ENCODE measurements at regions of chr4 and their contacts with region 1.

Region 1: GRCh38 chr4:6855692-6856297 is 53.8 kb upstream of the TBC1D14 start:
- DNase-seq: peak; percentile 38 to 84 (median 52)
- H3K4me3 ChIP-seq: no peak overlapping the region
- H3K4me3 Mint-ChIP-seq: peak overlapping the region in 5 of 8 donors; percentile 1 to 30 (median 9)
- H3K27ac ChIP-seq: no peak overlapping the region
- H3K27ac Mint-ChIP-seq: peak overlapping the region; percentile 19 to 86 (median 71)
- H3K4me1 ChIP-seq: peaks cover 25% of the 10 kb centered on the region
- H3K4me1 Mint-ChIP-seq: peaks cover 15 to 45% (median 26%) of the 10 kb centered on the region in 4 donors
- H3K27me3 ChIP-seq: no peaks in the 10 kb centered on the region
- H3K27me3 Mint-ChIP-seq: no peaks in the 10 kb centered on the region

Region 2: DNA sequence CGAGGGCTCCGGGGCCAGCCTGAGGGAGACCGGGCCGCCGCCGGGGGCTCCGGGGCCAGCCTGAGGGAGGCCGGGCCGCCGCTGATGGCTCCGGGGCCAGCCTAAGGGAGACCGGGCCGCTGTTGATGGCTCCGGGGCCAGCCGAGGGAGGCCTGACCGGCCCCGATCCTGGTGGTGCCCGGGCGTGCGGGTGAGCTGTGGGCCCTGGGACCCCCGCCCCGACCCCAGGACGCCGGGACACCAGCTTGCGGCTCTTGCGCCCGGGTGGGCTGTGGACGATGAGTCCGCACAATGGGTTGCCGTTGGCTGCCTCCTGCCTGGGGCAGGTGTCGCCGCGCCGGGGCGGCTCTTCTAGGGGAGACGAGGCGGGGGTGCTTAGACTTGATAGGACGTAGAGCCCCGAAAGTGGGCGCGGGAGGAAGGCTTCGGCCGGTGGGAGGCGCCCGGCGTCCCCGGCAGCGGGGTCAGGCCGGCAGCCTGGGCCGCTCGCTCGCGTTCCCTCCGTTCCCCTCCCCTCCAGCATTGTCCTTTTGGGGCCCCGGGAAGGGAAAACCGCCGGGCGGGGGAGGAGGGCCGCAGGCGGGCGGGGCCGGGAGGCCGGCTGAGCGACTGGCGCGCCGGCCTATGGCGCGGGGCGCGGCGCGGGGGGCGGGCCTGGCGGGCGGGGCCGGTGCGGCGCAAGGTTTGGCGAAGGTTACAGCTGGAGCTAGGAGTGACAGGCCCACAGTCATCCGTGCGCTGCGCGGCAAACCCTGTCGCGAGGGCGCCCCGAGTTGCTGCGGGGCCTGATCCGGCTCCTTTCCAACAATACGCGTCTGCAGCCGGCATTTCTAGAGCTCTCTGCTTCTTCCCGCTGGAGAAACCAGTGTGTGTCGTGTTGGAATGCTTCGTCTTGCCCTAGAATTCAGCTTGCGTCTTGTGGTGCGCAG is 72.5 kb before region 1 on chr4:
- CTCF ChIA-PET with region 1: no interaction called
- POLR2A ChIA-PET with region 1: no interaction called
- intact Hi-C with region 1: loop called (anchors 2 kb)
- DNase-seq: peak; percentile 87 to 89 (median 88)
- H3K4me3 ChIP-seq: peak overlapping the region; percentile 38 to 71
- H3K4me3 Mint-ChIP-seq: peak overlapping the region; percentile 84 to 92 (median 88)
- H3K27ac ChIP-seq: peak overlapping the region; percentile 96
- H3K27ac Mint-ChIP-seq: peak overlapping the region; percentile 88 to 93 (median 91)
- H3K4me1 ChIP-seq: peaks cover 44% of the 10 kb centered on the region
- H3K4me1 Mint-ChIP-seq: peaks cover 32 to 61% (median 47%) of the 10 kb centered on the region in 4 donors
- H3K27me3 ChIP-seq: no peaks in the 10 kb centered on the region
- H3K27me3 Mint-ChIP-seq: no peaks in the 10 kb centered on the region

Region 3: DNA sequence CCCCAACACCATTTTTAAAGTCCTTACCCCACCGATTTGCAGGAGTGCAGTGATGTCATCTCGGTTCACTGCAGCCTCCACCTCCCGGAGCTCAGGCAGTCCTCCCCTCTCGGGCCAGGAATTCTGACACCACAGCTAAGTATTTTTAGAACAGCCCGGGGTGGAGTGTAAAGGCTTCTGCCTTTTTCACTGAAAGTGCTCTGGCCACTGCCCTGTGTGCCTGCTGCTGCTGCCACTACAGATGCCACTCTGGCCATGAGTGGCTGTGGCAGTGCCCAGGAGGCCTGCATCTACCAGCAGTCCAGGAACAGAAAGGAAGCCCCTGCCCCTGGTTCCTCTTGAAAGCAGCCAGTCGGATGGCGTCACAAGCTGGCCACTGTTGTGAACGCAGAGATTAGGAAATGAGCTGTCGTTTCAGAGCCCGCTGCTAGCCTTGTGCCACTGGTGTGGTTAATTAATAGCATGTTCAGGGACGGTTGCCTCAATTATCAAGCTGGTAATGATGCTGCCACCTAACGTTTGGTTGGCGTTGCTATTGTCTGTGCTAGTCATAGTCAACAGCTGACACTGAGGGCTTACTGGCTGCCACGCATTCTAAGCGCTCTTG is 30.3 kb after region 1 on chr4:
- CTCF ChIA-PET with region 1: no interaction called
- POLR2A ChIA-PET with region 1: no interaction called
- intact Hi-C with region 1: no loop called
- DNase-seq: no peak
- H3K4me3 ChIP-seq: no peak overlapping the region
- H3K4me3 Mint-ChIP-seq: no peak overlapping the region
- H3K27ac ChIP-seq: no peak overlapping the region
- H3K27ac Mint-ChIP-seq: no peak overlapping the region
- H3K4me1 ChIP-seq: no peaks in the 10 kb centered on the region
- H3K4me1 Mint-ChIP-seq: peaks cover 0 to 5% (median 3%) of the 10 kb centered on the region in 4 donors
- H3K27me3 ChIP-seq: no peaks in the 10 kb centered on the region
- H3K27me3 Mint-ChIP-seq: no peaks in the 10 kb centered on the region

Region 4: DNA sequence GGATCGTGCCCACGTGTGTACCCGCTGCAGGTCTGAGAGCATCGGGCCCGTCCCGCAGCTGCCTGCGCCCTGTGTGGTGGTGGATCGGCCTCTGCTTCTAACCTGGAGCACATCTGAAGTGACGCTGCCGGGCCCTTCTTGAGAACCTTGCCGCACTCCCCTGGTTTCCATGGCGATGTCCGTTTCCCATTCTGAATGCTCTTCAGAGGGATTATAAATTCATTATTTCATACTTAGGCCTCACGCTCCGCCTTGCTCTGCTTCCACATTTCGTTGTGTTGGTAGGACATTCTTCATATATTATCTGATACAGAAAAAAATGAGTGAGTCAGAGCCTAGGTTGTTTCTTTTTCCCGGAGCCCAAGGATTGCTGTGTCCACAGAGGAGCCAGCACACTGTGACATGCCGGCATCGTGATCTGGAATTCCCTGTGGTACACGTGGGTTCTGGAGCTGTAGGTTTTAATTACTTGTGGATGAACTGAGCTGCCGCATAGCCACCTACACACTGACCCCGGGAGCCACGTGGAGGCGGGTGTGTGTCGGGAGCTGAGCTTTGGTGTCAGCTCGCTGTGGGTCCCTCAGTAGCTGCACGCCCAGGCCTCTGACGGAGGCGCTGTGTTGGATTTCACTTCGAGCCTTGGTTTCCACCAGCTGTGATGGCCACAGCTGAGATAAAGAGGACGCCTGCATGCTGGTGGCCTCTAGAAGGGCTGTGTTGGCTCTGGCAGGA is 515.6 kb after region 1 on chr4:
- CTCF ChIA-PET with region 1: no interaction called
- POLR2A ChIA-PET with region 1: no interaction called
- intact Hi-C with region 1: no loop called
- DNase-seq: no peak
- H3K4me3 ChIP-seq: no peak overlapping the region
- H3K4me3 Mint-ChIP-seq: no peak overlapping the region
- H3K27ac ChIP-seq: no peak overlapping the region
- H3K27ac Mint-ChIP-seq: no peak overlapping the region
- H3K4me1 ChIP-seq: no peaks in the 10 kb centered on the region
- H3K4me1 Mint-ChIP-seq: peaks cover 0 to 2% (median 0%) of the 10 kb centered on the region in 4 donors
- H3K27me3 ChIP-seq: no peaks in the 10 kb centered on the region
- H3K27me3 Mint-ChIP-seq: peaks cover 12 to 16% of the 10 kb centered on the region in 2 donors